ENCODE measurements at regions of chr9 and their contacts with region 1.

Region 1: DNA sequence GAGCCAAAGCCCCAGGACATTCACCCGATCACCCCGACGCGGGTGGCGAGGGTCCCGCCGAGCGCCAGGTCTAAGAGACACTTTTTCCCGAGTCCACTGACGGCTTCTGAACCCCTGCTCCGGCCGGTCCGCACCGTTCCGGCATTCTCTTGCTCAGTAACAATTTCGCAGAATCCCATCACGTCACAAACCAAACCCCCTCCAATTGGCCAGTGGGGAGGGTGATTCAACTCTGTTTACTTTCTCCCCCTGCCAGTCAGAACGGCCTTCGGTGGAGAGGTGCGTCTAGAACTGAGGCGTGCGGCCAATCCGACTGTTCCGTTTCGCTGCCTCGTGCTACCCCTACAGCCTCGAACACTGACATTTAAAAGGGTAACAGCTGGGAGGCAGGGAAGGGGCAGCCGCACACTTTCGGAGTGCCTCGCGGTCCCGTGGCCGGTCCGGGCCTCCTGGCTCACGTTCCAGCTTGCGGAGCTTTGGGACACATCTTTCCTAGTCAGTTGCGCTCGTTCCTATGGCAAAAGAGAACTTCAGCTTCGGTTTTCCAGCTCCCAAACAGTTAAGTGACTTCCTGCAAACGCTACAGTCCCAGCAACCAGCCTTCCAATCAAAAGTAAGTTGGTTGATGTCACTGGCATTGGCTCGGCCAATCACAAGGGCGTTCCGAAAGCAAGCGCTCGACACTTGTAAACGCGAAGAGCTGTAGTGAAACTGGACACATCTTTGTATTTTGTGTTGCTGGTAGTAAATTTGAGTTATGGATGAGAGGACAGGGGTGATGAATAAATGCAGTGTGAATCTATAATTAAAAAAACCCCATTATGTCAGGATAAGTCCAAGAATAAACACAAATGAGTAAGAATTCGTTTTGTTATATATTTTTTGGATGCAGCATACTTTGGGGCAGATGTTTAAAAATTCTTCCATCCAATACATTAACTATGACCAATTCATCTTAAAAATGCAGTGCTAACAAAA is at the start of gene KLF9:
- DNase-seq: peak; percentile 92
- H3K4me3 ChIP-seq: peak within 1 kb of the TSS; percentile 64
- H3K27ac ChIP-seq: peak within 1 kb of the TSS; percentile 87
- H3K4me1 ChIP-seq: peaks cover 17% of the 10 kb centered on the region
- H3K27me3 ChIP-seq: no peaks in the 10 kb centered on the region
- CTCF ChIP-seq: no peak
- total RNA-seq, gene KLF9: 0.34 and 1.0 TPM in 2 replicates

Region 2: GRCh38 chr9:69622676-69623075 is 791.4 kb before region 1 on chr9:
- CTCF ChIA-PET with region 1: no interaction called
- POLR2A ChIA-PET with region 1: interaction called, 10 read pairs
- intact Hi-C with region 1: no loop called
- DNase-seq: no peak
- H3K4me3 ChIP-seq: no peak overlapping the region
- H3K27ac ChIP-seq: no peak overlapping the region
- H3K4me1 ChIP-seq: no peaks in the 10 kb centered on the region
- H3K27me3 ChIP-seq: peaks cover 19% of the 10 kb centered on the region
- CTCF ChIP-seq: no peak

Region 3: DNA sequence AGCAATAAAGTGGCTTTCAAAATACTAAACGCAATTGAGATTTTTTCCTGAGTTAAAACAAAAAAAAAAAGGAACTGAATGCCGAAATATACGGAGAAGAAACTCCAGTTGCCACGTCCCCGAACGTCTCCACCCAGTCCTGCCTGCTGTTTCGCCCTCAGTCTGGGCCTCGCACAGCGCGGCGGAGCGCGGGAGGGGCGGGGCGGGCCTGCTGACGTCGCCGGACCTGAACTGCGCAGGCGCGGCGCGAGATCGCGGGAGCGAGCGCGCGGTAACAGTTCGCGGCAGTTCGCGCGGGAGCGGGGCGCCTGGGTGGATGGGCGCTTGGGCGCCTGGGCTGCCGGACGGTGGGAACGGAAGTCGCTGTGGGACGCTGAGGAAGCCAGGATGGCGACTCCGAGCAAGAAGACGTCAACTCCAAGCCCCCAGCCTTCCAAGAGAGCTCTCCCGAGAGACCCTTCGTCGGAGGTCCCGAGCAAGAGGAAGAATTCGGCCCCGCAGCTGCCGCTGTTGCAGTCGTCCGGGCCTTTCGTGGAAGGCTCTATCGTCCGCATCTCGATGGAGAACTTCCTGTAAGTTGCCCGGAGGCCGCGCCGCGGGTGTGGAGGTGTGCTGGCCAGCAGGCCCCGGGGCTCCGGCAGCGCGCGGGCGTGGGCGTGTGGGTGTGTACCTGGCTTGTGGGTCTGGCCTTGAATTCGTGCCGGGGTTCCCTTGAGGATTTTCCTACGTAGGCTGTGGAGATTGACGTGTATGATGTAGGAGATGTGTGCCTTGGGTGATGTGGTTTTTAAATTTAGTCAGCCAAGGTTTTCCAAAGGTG is 155.2 kb before region 1 on chr9 and contains the start of gene SMC5:
- CTCF ChIA-PET with region 1: no interaction called
- POLR2A ChIA-PET with region 1: no interaction called
- intact Hi-C with region 1: loop called (anchors 10 kb)
- DNase-seq: peak; percentile 93
- H3K4me3 ChIP-seq: peak within 1 kb of the TSS; percentile 95
- H3K27ac ChIP-seq: peak within 1 kb of the TSS; percentile 96
- H3K4me1 ChIP-seq: peaks cover 30% of the 10 kb centered on the region
- H3K27me3 ChIP-seq: no peaks in the 10 kb centered on the region
- CTCF ChIP-seq: no peak
- total RNA-seq, gene SMC5: 26.4 and 26.5 TPM in 2 replicates

Region 4: GRCh38 chr9:70484210-70485130 is 70.4 kb after region 1 on chr9:
- CTCF ChIA-PET with region 1: no interaction called
- POLR2A ChIA-PET with region 1: no interaction called
- intact Hi-C with region 1: loop called (anchors 5 kb)
- DNase-seq: peak; percentile 58
- H3K4me3 ChIP-seq: no peak overlapping the region
- H3K27ac ChIP-seq: no peak overlapping the region
- H3K4me1 ChIP-seq: no peaks in the 10 kb centered on the region
- H3K27me3 ChIP-seq: no peaks in the 10 kb centered on the region
- CTCF ChIP-seq: peak; percentile 79